Activated CD4-positive, alpha-beta memory T cell treated with anti-CD3 and anti-CD28 coated beads for 36 hours (primary cell): ENCODE measurements at regions of chr4 and their contacts with region 1.

Region 1: DNA sequence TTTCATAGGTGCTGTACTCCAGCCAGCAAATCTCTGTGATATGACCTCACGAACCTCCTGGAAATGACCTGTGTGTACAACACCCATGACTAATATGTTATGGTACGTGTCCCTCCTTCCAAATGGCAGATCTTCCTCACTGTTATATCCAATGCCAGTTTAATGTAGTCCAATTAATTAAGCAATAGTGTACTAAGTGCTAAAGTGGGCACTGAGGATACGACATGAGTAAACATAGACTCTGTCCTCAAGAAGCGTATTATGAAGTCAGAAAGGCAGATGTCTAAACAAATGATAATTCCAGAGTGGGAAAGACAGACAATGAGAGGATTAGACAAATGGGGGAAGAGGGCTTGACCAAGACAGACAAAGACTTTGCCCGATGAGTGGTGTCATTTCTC is 33.9 kb downstream of the GPRIN3 start:
- DNase-seq: no peak
- H3K4me3 Mint-ChIP-seq: no peak overlapping the region
- H3K27ac Mint-ChIP-seq: no peak overlapping the region
- H3K4me1 Mint-ChIP-seq: peaks cover 86% of the 10 kb centered on the region
- H3K27me3 Mint-ChIP-seq: no peaks in the 10 kb centered on the region

Region 2: DNA sequence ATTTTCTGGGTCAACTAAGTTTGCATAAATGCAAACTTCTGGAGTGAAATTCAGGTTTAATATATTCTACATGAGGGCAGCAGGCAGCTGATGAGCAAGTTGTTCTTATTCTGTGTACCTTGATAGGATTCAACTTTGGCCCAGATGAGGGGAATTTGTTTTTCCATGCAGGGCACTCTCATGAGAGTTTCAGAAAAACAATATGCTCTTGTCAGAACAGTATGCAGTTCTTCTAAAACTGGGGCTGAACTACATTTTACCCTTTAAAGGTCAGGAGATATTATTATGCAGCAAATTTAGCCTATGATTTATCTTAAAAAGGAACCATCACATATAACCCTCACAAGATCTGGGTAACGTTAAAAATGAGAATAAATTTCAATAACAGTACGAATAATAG is 14.7 kb after region 1 on chr4:
- CTCF ChIA-PET with region 1: interaction called, 6 read pairs
- POLR2A ChIA-PET with region 1: interaction called, 6 read pairs
- intact Hi-C with region 1: loop called (anchors 1 kb)
- DNase-seq: no peak
- H3K4me3 Mint-ChIP-seq: peak overlapping the region; percentile 78
- H3K27ac Mint-ChIP-seq: peak overlapping the region; percentile 92
- H3K4me1 Mint-ChIP-seq: peaks cover 94% of the 10 kb centered on the region
- H3K27me3 Mint-ChIP-seq: no peaks in the 10 kb centered on the region